ENCODE measurements at regions of chr12 and their contacts with region 1.

Region 1: DNA sequence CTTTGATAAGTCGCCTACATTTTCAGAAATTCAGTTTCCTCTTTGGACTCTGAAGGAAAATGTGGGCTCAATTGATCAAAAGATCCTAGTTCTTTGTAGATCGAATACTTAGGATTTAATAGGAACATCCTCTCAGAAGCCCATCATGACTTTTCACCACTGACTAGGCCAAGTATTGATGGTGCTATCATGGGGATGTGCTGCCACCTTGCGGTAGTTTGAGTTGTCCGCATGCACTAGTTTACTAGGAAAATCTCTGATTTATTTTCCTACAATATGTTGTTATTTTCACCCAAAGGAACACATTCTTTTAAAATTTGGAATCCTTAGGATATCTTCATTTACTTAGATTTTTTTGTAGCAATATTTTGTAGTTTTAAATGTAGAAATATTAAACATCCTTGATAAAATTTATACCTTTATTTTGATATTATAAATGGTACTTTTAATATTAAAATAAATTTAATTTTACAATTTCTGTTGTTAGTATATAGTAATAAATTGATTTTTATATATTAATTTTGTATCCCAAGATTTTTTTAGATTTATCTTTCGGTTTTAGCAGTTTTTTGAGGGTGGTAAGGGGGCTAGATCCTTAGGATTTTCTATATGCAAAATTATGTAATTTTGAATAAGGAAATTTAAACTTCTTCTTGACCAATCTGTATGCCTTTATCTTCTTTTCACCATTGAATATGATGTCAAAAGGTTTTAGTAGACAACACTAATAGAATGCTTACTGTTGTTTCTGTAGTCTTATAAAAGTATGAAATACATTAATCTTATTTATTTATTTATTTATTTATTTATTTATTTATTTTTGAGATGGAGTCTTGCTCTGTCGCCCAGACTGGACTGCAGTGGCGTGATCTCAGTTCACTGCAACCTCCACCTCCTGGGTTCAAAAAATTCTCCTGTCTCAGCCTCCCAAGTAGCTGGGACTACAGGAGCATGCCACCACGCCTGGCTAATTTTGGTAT is 52.9 kb upstream of the OR9K2 start:
- DNase-seq: peak; percentile 48
- ATAC-seq: peak; percentile 60
- H3K4me3 Mint-ChIP-seq: no peak overlapping the region
- H3K27ac Mint-ChIP-seq: no peak overlapping the region
- H3K4me1 Mint-ChIP-seq: peaks cover 17% of the 10 kb centered on the region
- H3K27me3 Mint-ChIP-seq: peaks cover 3% of the 10 kb centered on the region
- CTCF ChIP-seq: peak; percentile 97

Region 2: DNA sequence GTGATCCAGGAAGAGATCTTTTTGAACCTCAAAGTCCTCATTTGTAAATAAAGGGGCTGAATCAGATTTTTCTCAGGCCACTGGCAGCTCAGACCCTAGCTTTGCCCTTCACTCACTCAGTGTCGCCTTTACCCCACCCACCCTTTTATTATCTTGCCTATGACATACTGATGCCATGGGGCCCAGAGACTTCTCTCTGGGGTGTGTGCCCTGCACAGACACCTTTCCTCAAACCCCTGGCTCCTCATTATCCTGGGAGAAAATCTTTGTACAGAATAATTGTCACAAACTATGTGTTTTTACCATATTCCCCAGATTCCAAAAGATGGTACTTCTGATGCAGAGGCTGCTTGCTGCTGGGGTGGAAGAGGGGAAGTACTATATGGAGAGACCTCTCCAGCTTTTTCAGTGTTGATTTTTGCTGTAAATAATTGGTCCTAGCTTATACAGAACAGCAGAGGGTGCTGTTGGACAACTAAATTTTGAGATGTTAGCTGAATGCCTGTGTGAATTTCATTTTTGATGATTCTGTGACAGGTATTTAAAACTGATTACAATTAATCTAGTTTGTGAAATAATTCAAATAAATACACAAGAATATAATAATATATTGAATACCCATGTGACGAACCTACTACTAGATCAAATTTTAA is 371.3 kb before region 1 on chr12:
- CTCF ChIA-PET with region 1: interaction called, 22 read pairs
- POLR2A ChIA-PET with region 1: no interaction called
- intact Hi-C with region 1: loop called (anchors 1 kb)
- DNase-seq: no peak
- ATAC-seq: no peak
- H3K4me3 Mint-ChIP-seq: no peak overlapping the region
- H3K27ac Mint-ChIP-seq: no peak overlapping the region
- H3K4me1 Mint-ChIP-seq: no peaks in the 10 kb centered on the region
- H3K27me3 Mint-ChIP-seq: peaks cover 8% of the 10 kb centered on the region
- CTCF ChIP-seq: no peak

Region 3: DNA sequence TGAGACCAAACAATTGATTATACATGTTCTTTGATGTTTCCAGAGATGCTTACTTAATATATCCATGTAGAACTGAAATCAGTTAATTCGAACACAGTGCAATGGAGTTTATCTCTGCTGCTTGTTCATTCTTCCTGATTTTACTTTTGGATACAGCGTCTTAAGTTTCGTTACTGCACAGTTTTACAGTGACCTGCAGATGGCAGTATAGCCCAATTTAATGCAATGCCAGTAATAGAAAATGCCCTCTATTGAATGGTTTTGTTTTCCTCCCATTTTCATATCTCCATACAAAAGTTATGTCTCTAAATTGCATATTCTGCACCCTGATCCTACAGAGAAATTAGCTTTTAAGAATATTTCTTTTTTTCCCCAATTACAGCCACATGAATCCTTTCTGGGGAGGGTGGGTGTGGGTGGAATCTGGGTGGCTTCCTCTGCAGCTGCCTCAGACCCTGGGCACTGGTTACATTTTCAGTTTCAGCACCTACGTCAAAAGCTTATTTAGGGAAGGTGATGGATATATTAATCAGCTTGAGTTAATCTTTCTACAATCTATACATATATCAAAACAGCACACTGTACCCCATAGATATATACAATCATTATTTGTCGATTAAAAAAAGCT is 324.0 kb before region 1 on chr12:
- CTCF ChIA-PET with region 1: interaction called, 59 read pairs
- POLR2A ChIA-PET with region 1: no interaction called
- intact Hi-C with region 1: loop called (anchors 1 kb)
- DNase-seq: no peak
- ATAC-seq: peak; percentile 54
- H3K4me3 Mint-ChIP-seq: no peak overlapping the region
- H3K27ac Mint-ChIP-seq: no peak overlapping the region
- H3K4me1 Mint-ChIP-seq: peaks cover 3% of the 10 kb centered on the region
- H3K27me3 Mint-ChIP-seq: peaks cover 2% of the 10 kb centered on the region
- CTCF ChIP-seq: peak; percentile 75

Region 4: DNA sequence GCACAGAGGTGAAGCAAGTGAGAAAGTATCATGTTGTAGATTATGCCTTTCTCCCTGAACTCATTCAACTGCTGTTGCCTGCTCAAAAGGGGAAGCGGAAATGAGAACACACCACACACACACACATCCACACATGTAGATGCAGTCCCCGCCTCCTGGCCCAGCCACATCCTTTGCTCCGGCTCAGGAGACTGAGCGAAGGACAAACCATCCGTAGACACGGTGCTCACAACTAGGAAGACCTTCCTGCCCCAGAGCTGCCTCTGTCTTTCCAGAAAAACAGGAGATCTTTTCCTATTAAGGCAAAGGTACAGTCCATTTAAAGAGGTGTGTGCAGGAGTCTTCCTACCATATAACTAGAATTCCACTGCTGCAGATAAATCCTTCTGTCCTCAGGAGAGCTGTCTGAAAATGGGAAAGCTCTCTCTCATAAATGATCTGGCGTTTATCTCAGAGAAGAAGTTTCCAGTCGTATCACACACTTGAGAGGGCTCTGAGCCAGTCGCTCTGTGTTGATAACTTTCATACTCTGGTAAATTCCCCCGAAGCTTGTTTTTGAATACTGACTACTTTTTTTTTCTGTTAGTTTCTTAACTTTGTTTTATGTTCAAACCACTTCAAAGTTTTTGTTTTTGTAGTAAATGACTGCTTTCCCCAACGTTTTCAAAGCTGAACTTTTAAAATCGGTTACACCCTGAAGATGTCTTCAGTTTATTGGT is 88.5 kb before region 1 on chr12 and contains the start of gene TESPA1:
- CTCF ChIA-PET with region 1: interaction called, 31 read pairs
- POLR2A ChIA-PET with region 1: interaction called, 3 read pairs
- intact Hi-C with region 1: no loop called
- DNase-seq: peak; percentile 62
- ATAC-seq: peak; percentile 97
- H3K4me3 Mint-ChIP-seq: peak within 1 kb of the TSS; percentile 89
- H3K27ac Mint-ChIP-seq: peak within 1 kb of the TSS; percentile 97
- H3K4me1 Mint-ChIP-seq: peaks cover 80% of the 10 kb centered on the region
- H3K27me3 Mint-ChIP-seq: no peaks in the 10 kb centered on the region
- CTCF ChIP-seq: no peak
- total RNA-seq, gene TESPA1: 31.5 and 35.5 TPM in 2 replicates

Region 5: GRCh38 chr12:55001198-55001868 is 72.0 kb before region 1 on chr12:
- CTCF ChIA-PET with region 1: interaction called, 425 read pairs
- POLR2A ChIA-PET with region 1: no interaction called
- intact Hi-C with region 1: no loop called
- DNase-seq: no peak
- ATAC-seq: peak; percentile 68
- H3K4me3 Mint-ChIP-seq: peak overlapping the region; percentile 28
- H3K27ac Mint-ChIP-seq: peak overlapping the region; percentile 41
- H3K4me1 Mint-ChIP-seq: peaks cover 28% of the 10 kb centered on the region
- H3K27me3 Mint-ChIP-seq: no peaks in the 10 kb centered on the region
- CTCF ChIP-seq: no peak

Region 6: GRCh38 chr12:55142669-55143565 is 69.6 kb after region 1 on chr12:
- CTCF ChIA-PET with region 1: interaction called, 5 read pairs
- POLR2A ChIA-PET with region 1: no interaction called
- intact Hi-C with region 1: loop called (anchors 2 kb)
- DNase-seq: no peak
- ATAC-seq: no peak
- H3K4me3 Mint-ChIP-seq: no peak overlapping the region
- H3K27ac Mint-ChIP-seq: no peak overlapping the region
- H3K4me1 Mint-ChIP-seq: peaks cover 5% of the 10 kb centered on the region
- H3K27me3 Mint-ChIP-seq: peaks cover 3% of the 10 kb centered on the region
- CTCF ChIP-seq: no peak

Region 7: DNA sequence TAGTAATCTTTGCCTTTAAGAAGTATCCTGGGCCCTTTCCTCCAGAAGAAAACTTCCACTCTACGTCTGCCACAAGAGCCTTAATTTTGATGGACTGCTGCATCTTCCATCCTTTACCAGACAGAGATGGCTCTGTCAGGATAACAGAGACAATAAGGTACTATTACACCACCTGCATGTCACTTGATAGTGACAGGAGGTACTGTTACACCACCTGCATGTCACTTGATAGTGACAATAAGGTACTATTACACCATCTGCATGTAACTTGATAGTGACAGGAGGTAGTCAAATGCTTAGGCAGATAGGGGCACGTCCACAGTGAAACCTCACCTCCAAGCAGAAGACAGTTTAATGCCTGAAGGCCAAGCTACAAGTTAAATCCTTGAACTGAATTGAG is 185.0 kb after region 1 on chr12:
- CTCF ChIA-PET with region 1: no interaction called
- POLR2A ChIA-PET with region 1: no interaction called
- intact Hi-C with region 1: no loop called
- DNase-seq: no peak
- ATAC-seq: no peak
- H3K4me3 Mint-ChIP-seq: no peak overlapping the region
- H3K27ac Mint-ChIP-seq: no peak overlapping the region
- H3K4me1 Mint-ChIP-seq: no peaks in the 10 kb centered on the region
- H3K27me3 Mint-ChIP-seq: peaks cover 4% of the 10 kb centered on the region
- CTCF ChIP-seq: no peak